ENCODE measurements at regions of chr20 and their contacts with region 1.

Region 1: GRCh38 chr20:31630187-31630790 is 7.4 kb upstream of the COX4I2 start:
- DNase-seq: no peak
- H3K4me3 Mint-ChIP-seq: no peak overlapping the region
- H3K27ac Mint-ChIP-seq: no peak overlapping the region
- H3K4me1 Mint-ChIP-seq: no peaks in the 10 kb centered on the region
- H3K27me3 Mint-ChIP-seq: no peaks in the 10 kb centered on the region

Region 2: DNA sequence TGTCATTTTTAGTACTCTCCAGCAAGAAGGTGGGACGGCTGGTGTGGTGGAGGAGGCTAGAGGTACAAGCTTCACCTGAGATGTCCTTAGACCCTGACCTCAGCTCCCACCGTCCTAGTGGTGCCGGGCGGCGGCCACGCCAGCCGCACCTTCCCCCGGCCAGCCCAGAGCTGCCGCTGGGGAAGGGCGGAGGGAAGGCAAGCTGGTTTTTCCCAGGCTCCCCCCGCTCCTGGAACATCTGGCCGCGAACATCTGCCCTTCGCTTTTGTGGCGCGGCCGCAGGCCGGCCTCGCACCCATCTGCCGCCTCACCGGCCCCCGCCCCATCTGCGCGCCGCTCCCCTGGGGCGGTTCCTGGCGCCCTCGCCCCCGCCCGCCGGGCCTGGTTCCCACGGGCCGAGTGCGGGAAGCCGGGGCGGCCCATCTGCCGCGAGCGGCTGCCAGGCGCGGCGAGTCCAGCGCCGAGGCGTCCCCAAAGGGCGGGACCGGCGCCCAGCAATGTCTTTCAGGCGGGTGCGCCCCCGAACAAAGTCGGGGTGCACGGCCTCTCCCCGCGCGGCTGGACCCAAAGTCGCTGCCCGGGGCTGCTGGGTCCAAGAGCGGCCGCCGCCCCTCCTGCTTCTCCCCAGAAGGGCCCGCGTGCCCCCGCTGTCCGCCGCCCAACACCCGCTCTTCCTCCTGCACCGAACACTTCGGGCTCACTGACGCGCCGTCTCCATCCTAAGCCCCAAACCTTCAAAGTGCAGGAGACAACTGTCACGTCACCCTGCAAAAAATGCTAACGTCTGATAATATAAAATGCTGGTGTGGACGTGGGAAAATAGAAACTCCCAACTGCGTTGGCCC is 42.5 kb before region 1 on chr20:
- CTCF ChIA-PET with region 1: no interaction called
- intact Hi-C with region 1: no loop called
- DNase-seq: no peak
- H3K4me3 Mint-ChIP-seq: peak overlapping the region; percentile 55
- H3K27ac Mint-ChIP-seq: no peak overlapping the region
- H3K4me1 Mint-ChIP-seq: peaks cover 8% of the 10 kb centered on the region
- H3K27me3 Mint-ChIP-seq: peaks cover 25% of the 10 kb centered on the region

Region 3: GRCh38 chr20:31644701-31645100 is 14.4 kb after region 1 on chr20:
- CTCF ChIA-PET with region 1: interaction called, 19 read pairs
- intact Hi-C with region 1: no loop called
- DNase-seq: no peak
- H3K4me3 Mint-ChIP-seq: no peak overlapping the region
- H3K27ac Mint-ChIP-seq: no peak overlapping the region
- H3K4me1 Mint-ChIP-seq: peaks cover 4% of the 10 kb centered on the region
- H3K27me3 Mint-ChIP-seq: no peaks in the 10 kb centered on the region

Region 4: GRCh38 chr20:31842471-31843157 is 212.3 kb after region 1 on chr20:
- CTCF ChIA-PET with region 1: interaction called, 9 read pairs
- intact Hi-C with region 1: loop called (anchors 5 kb)
- DNase-seq: no peak
- H3K4me3 Mint-ChIP-seq: no peak overlapping the region
- H3K27ac Mint-ChIP-seq: no peak overlapping the region
- H3K4me1 Mint-ChIP-seq: no peaks in the 10 kb centered on the region
- H3K27me3 Mint-ChIP-seq: peaks cover 1% of the 10 kb centered on the region